Motor neuron (in vitro differentiated cells): ENCODE measurements at regions of chr2 and their contacts with region 1.

Region 1: DNA sequence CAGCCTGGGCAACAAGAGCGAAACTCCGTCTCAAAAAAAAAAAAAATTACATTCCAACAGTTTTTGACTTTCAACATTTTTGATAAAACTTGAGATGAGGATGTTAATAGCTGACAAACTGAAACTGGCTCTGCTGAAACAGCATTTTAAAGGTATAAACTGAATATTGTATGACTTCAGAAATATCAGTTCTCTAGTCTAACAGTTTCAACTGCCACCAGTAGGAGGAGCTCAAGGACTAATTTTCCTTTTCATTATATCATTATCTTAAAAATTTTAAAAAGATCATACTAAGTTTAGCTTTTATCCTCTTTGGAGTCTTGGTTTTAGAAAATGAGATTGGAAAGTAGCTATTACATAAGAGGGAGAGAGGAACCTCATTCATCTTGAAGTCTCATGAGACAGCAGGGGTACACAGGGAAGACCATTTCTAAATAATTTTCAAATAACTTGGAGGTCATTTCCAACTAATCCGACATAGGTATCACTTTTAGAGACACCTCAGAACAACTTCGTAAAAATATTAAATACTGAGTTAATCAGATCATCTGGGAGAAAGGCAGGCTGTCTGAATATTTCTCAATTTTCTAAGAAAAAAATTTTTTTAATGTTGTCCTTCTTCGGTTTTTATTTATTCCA is 37.6 kb upstream of the MCM6 start:
- ATAC-seq: peak in 2 of 8 experiments; percentile 29 to 53
- H3K4me3 ChIP-seq: no peak overlapping the region
- H3K27ac ChIP-seq: no peak overlapping the region
- H3K4me1 ChIP-seq: no peaks in the 10 kb centered on the region

Region 2: DNA sequence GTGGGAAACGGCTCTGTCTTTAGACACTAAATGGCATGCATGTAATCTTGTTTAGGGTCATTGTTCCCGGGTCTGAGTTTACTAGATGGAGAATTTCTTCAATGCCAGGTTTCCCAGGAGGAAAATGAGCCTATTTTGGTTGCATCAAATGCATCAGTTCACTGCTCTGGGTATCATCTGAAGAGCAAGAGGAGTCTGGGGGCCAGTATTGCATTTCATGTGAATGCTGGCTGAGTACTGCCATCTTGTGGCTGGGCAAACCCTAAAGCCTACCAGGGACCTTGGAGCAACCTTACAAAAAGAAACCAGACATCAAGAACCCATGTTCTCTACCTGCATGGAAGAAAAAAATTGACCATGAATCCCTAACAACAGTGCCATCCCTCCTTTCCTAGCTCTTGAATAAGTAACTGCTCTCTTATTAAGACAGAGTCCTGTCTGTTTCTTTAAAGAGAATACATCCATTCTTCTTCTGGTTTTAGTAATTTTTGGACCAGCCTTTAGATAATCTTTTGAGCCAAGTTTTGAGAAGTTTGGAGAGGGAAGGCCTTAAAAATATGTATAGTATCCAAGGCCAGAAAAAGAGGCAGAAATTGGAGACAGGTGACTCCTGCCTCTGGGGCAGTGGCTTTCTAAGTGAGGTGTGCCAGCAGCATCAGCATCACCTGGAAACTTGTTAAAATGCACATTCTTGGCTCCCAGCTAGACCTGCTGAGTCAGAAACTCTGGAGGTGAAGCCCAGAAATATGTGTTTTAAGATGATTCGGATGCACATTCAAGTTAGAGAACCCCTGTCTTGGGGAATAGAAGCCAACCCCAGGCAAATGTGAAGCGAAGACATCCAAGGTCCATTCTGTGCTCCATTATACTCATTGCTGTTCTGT is 465.1 kb after region 1 on chr2:
- in situ Hi-C with region 1: loop called (anchors 5 to 25 kb)
- ATAC-seq: peak; percentile 42 to 96 (median 80)
- H3K4me3 ChIP-seq: no peak overlapping the region
- H3K27ac ChIP-seq: no peak overlapping the region
- H3K4me1 ChIP-seq: peaks cover 3 to 7% of the 10 kb centered on the region in 2 donors